PC-9 (cell line): ENCODE measurements at regions of chr19 and their contacts with region 1.

Region 1: DNA sequence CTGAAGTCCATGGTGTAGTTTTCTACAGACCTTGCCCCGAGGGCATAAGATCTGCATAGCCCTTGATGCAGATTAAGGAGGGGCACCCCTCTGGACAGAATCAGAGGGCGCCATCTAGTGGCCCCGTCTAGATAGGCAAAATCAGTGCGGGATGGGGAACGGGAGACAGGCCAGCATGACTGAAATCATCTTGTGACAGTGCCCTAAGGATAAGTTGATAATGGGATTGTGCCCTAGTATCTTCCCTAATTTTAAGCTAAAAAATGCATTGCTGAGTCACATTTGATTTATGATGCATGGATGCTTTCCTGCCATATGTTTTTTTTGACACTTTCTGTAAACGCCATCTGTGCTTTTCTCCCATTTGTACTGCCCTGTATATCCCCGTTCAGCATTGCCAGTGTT is 19.0 kb upstream of the GPI start:
- DNase-seq: peak; percentile 76 to 81
- H3K4me3 ChIP-seq: no peak overlapping the region
- H3K27ac ChIP-seq: no peak overlapping the region
- H3K4me1 ChIP-seq: no peaks in the 10 kb centered on the region
- H3K27me3 ChIP-seq: no peaks in the 10 kb centered on the region
- CTCF ChIP-seq: peak; percentile 93

Region 2: DNA sequence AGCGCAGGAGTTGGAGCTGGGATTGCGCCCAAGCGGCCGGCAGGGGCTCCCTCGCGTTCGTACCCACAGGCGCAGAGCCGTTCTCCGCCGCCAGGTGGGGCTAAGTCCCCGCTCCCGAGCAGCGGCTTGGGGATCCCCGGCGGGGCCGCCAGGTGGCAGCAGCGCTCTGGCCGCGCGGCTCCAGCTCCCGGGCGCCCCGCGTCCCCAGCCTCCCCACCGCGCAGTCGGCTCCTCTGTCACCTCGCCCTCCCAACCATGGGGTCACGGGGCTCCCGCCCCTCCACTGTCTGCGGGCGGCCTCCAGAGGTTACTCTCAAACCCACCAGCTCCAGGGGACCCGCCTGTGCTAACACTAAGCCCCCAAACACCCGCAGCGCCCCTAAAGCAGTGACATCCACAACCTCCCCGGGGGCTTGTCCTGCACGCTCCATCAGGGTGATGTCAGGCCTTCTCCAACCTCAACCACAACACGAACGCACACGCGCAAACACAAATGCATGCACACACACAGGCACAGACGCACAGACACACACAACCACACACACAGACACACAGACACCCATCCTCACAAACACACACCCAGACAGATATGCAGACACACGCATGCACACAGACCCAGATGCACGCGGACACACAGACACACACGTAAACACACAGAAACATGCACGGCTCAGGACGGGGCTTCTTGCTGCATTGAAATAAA is 567.7 kb before region 1 on chr19:
- CTCF ChIA-PET with region 1: no interaction called
- POLR2A ChIA-PET with region 1: no interaction called
- intact Hi-C with region 1: loop called (anchors 2 kb)
- DNase-seq: peak in 1 of 2 experiments; percentile 80
- H3K4me3 ChIP-seq: no peak overlapping the region
- H3K27ac ChIP-seq: no peak overlapping the region
- H3K4me1 ChIP-seq: no peaks in the 10 kb centered on the region
- H3K27me3 ChIP-seq: peaks cover 54% of the 10 kb centered on the region
- CTCF ChIP-seq: peak; percentile 97

Region 3: GRCh38 chr19:34145741-34146202 is 200.2 kb before region 1 on chr19:
- CTCF ChIA-PET with region 1: no interaction called
- POLR2A ChIA-PET with region 1: no interaction called
- intact Hi-C with region 1: loop called (anchors 10 kb)
- DNase-seq: peak; percentile 44 to 49
- H3K4me3 ChIP-seq: no peak overlapping the region
- H3K27ac ChIP-seq: no peak overlapping the region
- H3K4me1 ChIP-seq: no peaks in the 10 kb centered on the region
- H3K27me3 ChIP-seq: no peaks in the 10 kb centered on the region
- CTCF ChIP-seq: peak; percentile 84

Region 4: GRCh38 chr19:34171877-34172660 is 173.9 kb before region 1 on chr19 and contains the start of gene LSM14A:
- CTCF ChIA-PET with region 1: no interaction called
- POLR2A ChIA-PET with region 1: no interaction called
- intact Hi-C with region 1: loop called (anchors 5 kb)
- DNase-seq: peak; percentile 67 to 91
- H3K4me3 ChIP-seq: peak within 1 kb of the TSS; percentile 71
- H3K27ac ChIP-seq: peak within 1 kb of the TSS; percentile 90
- H3K4me1 ChIP-seq: peaks cover 45% of the 10 kb centered on the region
- H3K27me3 ChIP-seq: no peaks in the 10 kb centered on the region
- CTCF ChIP-seq: no peak
- total RNA-seq, gene LSM14A: 114 and 169 TPM in 2 replicates

Region 5: DNA sequence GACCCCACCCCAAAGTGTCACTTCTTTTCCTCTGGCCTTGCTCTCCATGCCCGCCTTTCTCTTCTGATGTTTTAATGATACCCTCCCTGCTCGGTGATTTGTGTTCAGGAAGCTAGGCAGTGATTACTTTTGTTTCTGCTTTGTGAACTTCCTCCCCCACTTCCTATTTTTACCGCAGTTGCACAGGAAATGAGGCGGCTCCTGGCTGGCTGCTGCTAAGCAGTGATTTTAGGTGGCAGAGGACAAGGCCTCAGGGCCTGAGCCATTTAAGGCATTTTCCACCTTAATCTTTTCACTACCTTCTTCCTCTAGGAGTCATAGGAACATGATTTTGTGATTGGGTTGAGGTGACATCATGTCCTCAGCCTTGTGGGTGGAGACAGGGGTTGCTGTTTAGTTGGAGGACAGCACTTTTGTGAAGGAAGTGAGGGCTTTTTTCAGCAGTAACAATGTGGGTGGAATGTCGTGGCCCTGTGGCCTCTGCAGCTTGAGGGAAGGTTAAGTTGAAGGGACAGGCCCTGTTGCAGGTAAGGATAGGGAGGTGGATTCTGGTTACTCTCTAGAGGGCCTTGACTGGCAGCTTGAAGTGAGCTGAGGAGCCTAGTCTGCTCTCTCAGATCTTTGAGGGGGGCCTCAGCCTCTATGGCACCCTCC is 75.9 kb before region 1 on chr19:
- CTCF ChIA-PET with region 1: interaction called, 11 read pairs
- POLR2A ChIA-PET with region 1: no interaction called
- intact Hi-C with region 1: no loop called
- DNase-seq: peak; percentile 61 to 74
- H3K4me3 ChIP-seq: no peak overlapping the region
- H3K27ac ChIP-seq: peak overlapping the region; percentile 33
- H3K4me1 ChIP-seq: peaks cover 13% of the 10 kb centered on the region
- H3K27me3 ChIP-seq: no peaks in the 10 kb centered on the region
- CTCF ChIP-seq: no peak

Region 6: GRCh38 chr19:34482380-34483250 is 136.7 kb after region 1 on chr19:
- CTCF ChIA-PET with region 1: no interaction called
- POLR2A ChIA-PET with region 1: no interaction called
- intact Hi-C with region 1: no loop called
- DNase-seq: no peak
- H3K4me3 ChIP-seq: no peak overlapping the region
- H3K27ac ChIP-seq: no peak overlapping the region
- H3K4me1 ChIP-seq: no peaks in the 10 kb centered on the region
- H3K27me3 ChIP-seq: no peaks in the 10 kb centered on the region
- CTCF ChIP-seq: no peak